ENCODE measurements at regions of chr17 and their contacts with region 1.

Region 1: DNA sequence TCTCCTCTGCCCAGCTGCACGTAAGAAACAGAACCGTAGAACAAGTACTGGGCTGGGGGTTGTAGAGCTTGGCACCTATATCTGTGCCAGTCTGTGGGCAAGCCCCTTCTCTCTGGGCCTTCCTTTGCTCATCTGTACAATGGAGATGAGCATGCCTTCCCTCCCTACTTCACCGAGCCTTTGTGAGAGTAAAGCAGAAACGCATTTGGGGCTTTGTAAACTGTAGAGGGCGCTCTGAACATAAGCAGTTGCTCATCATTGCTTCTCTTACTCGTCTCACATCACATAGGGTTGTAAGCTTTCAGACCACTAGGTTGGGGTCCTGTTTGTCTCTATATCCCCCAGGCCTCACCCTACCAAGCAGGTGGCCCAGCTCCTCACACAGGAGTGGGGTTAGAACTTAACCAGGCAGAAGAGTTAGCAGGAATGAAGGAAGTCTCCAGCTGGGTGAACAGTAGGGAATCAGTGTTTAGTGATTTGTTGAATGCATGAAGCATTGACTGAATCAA is 15.1 kb downstream of the SAMD14 start:
- DNase-seq: no peak
- H3K4me3 ChIP-seq: no peak overlapping the region
- H3K27ac ChIP-seq: no peak overlapping the region
- H3K4me1 ChIP-seq: peaks cover 7 to 25% of the 10 kb centered on the region in 2 donors
- H3K27me3 ChIP-seq: no peaks in the 10 kb centered on the region
- CTCF ChIP-seq: peak in 3 of 6 experiments; percentile 16 to 40 (median 27)
- POLR2A ChIP-seq: no peak

Region 2: GRCh38 chr17:50148226-50149090 is 33.6 kb after region 1 on chr17:
- intact Hi-C with region 1: loop called (anchors 5 kb)
- DNase-seq: peak; percentile 80 to 84
- H3K4me3 ChIP-seq: peak overlapping the region in 2 of 3 donors; percentile 76 to 86
- H3K27ac ChIP-seq: peak overlapping the region; percentile 50 to 86 (median 85)
- H3K4me1 ChIP-seq: peaks cover 39 to 42% of the 10 kb centered on the region in 2 donors
- H3K27me3 ChIP-seq: no peaks in the 10 kb centered on the region
- CTCF ChIP-seq: peak in 2 of 6 experiments; percentile 9 to 17
- POLR2A ChIP-seq: no peak

Region 3: DNA sequence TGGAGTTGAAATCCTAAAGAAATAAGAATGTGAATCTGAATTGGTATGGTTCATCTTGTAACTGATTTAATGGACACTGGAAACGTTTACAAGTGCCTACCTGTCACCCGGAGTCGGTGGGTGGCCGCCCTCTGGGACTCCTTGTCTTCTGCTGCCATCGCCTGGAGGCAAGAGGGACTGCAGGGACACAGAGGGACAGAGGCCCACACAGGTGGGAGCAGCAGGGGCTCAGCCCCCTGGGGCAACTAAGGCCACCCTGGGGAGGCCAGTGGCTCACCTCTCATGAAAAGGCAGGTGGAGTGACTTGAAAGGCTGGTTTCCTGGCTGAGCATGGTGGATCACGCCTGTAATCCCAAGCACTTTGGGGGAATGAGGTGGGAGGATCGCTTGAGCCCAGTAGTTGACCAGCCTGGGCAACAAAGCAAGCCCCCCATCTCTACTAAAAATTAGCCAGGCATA is 182.5 kb after region 1 on chr17:
- intact Hi-C with region 1: loop called (anchors 10 kb)
- DNase-seq: peak; percentile 76 to 83
- H3K4me3 ChIP-seq: no peak overlapping the region
- H3K27ac ChIP-seq: no peak overlapping the region
- H3K4me1 ChIP-seq: no peaks in the 10 kb centered on the region
- H3K27me3 ChIP-seq: no peaks in the 10 kb centered on the region
- CTCF ChIP-seq: peak; percentile 79 to 97 (median 92)
- POLR2A ChIP-seq: no peak

Region 4: DNA sequence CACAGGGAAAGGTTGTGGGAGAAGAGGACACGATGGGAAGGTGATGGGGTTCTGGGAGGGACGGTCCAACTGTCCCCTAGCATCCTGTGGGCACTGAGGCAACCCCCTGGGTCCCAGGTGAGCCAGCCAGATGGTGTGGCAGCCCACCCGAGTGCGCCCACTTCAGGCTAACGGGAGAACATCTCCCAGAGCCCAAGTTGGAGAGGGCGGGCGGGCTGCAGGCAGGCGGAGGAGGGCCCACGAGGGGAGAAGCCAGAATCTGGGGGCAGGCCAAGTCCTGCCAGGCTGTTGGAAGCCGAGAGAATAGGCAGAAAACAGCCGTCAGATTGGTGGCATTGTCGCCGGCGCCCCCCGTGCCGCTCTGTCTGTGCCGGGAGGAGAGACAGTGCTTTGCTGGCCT is 506.0 kb after region 1 on chr17:
- intact Hi-C with region 1: no loop called
- DNase-seq: no peak
- H3K4me3 ChIP-seq: no peak overlapping the region
- H3K27ac ChIP-seq: no peak overlapping the region
- H3K4me1 ChIP-seq: peaks cover 9% of the 10 kb centered on the region in 2 donors
- H3K27me3 ChIP-seq: no peaks in the 10 kb centered on the region
- CTCF ChIP-seq: no peak
- POLR2A ChIP-seq: no peak